Posterior vena cava (tissue), 2 donors: ENCODE measurements at regions of chr9 and their contacts with region 1.

Region 1: GRCh38 chr9:132235946-132236661 is 74.2 kb downstream of the NTNG2 start:
- DNase-seq: peak; percentile 91

Region 2: DNA sequence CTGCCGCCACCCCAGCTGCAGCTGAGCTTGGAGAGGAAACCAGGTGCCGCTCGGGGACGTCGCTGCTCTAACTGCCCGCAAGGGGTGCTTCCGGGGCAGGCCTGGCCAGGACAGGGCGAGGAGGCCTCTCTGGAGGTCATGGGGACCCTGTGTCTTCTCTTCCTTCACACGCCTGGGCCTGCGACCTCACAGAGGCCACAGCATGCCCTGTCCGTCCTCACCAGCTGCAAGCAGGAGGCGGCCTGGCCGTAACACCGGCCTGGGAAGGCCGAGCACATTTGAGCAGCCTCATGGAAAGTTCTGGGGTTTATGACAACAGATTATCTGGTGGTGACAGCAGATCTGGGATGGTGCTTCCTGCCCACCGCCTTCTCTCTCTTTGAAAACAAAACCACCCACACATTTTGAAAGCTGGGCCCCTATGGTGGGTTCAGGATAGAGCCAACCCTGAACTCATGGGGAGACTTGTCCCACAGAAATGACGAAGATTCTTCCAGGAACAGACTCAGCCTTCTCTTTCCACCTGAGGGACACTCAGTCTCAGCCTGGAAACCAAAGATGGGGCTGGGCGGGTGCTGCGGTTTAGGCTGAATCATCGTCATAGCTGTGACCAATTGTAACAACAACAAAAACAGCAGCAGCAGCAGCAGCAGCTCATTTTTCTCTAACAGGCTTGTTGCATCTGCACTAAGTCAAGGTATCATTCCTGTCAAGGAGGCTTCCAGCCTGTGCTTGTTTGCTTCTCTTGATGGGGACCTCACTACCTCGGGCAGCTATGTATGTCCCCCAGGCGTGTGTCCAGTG is 396.6 kb before region 1 on chr9:
- intact Hi-C with region 1: loop called in 1 of 2 experiments (anchors 1 kb)
- DNase-seq: peak; percentile 76

Region 3: DNA sequence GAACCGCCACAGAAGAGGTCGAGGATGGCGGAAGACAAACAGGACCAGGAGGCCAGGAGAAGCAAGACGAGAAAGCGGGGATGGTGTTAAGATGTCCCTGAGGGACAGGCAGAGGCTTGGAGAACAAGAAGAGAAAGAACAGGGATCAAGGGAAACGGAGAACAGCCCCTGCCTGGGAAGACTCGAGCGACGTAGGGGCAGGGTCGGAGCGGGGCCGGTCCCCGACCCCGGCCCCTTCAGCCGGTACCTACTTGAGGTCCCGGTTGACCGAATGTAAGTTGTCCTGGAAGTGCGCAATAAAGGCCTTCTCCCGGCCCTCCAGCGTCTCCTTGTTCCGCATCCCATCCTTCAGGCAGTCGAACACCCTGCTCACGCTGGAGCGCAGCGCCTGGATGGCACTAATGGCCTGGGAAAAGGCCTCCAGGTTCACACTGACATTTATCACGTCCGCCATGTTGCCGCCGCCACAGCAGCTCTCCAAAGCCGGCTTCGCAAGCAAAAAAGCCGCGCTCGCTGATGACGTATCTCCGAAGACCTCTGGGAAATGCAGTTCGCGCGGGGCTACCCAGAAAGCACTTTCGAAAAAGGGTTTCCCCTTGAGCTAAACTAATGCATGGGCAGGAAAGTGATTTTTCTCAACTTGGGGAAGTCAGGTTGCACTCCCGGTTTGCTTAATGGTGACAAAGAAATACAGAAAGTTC is 156.6 kb before region 1 on chr9 and contains the start of gene MED27:
- intact Hi-C with region 1: loop called in 1 of 2 experiments (anchors 10 kb)
- DNase-seq: peak; percentile 98
- total RNA-seq, gene MED27: 17.8 to 24.5 TPM

Region 4: DNA sequence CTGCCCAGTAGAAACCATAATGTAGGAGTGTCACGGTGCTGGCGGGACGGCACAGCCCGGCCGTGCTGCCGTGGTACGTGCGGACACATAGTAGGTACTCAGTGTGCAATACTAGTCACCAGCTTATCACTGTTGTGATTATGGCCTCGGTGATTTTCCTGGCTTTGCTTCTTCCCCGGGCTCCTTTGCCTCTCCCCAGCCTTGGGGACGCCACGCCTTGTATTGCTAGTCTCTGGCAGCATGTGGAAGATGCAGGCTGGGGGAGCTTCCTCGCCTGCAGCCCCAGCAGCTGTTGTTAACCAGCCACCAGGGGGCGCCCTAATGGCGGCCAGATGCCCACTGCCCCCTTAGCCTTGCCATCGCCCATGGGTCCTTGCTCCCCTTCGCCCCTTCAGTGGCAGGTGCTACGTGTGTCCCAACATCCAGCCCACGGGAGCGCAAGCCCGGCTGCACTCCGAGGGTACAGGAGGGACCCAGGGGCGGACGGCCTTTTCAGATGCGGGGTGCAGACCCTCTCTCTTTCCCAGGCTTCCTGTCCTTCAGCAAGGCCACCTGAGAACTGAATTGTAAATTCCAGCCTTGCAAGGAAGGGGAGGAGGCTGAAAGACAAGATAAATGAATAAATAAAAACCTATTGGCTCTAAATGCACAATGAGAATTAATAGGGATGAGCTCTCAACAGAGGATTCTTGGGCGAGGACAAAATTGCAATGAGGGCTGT is 66.3 kb before region 1 on chr9:
- intact Hi-C with region 1: loop called (anchors 2 to 10 kb)
- DNase-seq: no peak

Region 5: GRCh38 chr9:132288361-132288760 is 52.3 kb after region 1 on chr9:
- intact Hi-C with region 1: no loop called
- DNase-seq: no peak